SK-N-SH (cell line): ENCODE measurements at regions of chr12 and their contacts with region 1.

Region 1: DNA sequence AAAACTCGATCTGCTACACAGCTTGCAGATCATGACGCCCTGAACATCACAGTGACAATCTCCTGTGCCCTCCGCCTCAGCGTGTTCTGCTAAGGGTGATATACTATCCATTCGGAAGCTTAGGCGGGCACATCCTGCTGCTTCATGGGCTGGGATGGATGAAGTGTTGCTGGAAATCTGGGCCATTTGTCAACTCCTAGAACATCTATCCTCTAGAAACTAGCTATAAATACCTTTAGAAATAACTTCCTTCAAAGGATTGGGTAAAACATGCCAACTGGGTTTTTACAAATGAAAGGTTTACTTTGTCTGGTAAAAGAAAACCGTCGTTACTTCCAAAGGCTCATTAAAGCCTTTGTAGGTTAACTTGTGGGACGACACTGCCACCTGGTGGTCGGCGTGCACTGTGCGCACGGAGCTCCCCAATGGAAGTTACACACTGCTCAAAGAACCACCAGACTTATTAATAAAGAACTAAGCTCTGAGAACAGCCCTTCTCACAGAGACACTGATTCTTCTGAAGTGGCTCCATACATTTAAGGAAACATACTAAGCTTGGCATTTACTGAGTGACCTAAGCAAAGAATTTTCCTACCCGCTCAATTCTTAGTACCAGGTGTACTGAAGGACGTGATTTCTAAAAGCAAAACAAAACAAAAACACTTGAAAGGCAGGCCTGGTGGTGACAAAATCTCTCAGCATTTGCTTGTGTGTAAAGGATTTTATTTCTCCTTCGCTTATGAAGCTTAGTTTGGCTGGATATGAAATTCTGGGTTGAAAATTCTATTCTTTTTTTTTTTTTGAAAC is 21.6 kb upstream of the CACNA2D4 start:
- DNase-seq: peak; percentile 81
- H3K4me3 ChIP-seq: no peak overlapping the region; a peak in 1 of 4 replicates
- H3K27ac ChIP-seq: peak overlapping the region in 1 of 2 experiments; percentile 50; a peak in 1 of 4 replicates
- H3K4me1 ChIP-seq: peaks cover 0 to 31% of the 10 kb centered on the region in 2 experiments; a peak in 2 of 4 replicates
- H3K27me3 ChIP-seq: no peaks in the 10 kb centered on the region
- CTCF ChIP-seq: peak; percentile 98
- EP300 ChIP-seq: no peak
- RAD21 ChIP-seq: peak; percentile 98

Region 2: DNA sequence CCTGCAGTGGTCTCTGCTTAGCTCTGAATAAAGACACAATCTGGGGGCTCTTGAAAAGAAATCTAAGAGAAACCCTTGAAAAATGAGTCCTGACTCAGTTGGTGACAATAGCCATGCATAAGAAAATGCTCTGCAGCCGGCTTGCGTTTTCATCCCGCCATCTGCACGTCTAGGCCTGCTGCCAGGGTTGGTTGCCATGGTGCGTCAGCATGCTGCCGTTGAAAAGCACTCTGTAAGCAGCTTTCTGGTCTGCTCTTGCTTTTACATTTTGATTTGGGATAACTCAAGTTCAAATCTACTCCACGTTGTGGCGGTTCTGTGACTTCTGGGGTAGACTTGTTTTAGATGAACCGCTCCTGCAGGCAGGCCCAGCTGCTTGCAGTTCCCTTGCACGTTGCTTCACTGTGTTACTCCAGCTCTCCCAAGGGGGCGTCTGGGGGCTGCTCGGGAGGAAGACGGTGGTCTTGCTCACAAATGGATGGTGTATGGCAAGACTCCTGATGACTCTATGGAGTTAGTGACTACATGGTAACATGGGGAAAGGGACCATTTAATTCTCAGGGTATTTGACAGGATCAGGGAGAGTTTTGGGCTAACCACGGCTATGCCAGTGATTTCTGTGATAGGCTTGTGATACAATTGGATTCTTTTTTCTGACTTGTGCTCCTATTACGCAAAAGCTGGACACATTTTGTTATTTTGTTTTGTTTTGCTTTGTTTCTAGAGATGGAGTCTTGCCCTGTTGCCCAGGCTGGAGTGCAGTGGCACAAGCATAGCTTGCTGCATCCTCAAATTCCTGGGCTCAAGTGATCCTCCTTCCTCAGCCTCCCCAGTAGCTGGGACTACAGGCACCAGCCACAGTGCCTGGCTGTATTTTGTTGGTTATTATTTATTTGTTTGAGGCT is 295.2 kb before region 1 on chr12:
- CTCF ChIA-PET with region 1: interaction called, 140 read pairs
- POLR2A ChIA-PET with region 1: no interaction called
- DNase-seq: peak; percentile 88
- H3K4me3 ChIP-seq: no peak overlapping the region
- H3K27ac ChIP-seq: peak overlapping the region; percentile 56 to 89
- H3K4me1 ChIP-seq: peaks cover 15 to 29% of the 10 kb centered on the region in 2 experiments
- H3K27me3 ChIP-seq: no peaks in the 10 kb centered on the region
- CTCF ChIP-seq: no peak
- EP300 ChIP-seq: 0 out of 4 replicates have a peak, but pooled peaks of 1 of the 2 experiments have one; percentile 32
- RAD21 ChIP-seq: no peak; the same call in 1 of the 2 replicates

Region 3: DNA sequence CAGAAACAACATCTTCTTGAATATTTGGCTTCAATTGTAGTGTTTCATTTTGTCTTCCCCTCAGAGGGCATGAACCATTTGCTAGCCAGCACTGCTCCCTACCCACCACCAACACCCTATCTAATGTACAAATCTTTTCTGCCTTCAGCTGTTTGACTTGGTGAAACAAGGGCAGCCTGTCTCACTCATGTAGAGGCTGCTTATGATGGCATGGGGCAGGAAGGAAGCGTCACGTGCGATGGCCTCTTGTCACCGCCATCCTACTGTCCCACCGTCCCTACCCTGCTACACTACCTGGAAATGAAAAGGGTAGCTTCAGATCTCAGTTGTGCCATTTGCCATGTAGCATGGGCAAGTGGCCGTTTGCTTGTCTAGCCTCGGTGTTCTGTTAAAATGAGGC is 149.6 kb before region 1 on chr12:
- CTCF ChIA-PET with region 1: interaction called, 349 read pairs
- POLR2A ChIA-PET with region 1: interaction called, 9 read pairs
- DNase-seq: peak; percentile 9
- H3K4me3 ChIP-seq: no peak overlapping the region
- H3K27ac ChIP-seq: no peak overlapping the region
- H3K4me1 ChIP-seq: peaks cover 0 to 9% of the 10 kb centered on the region in 2 experiments; a peak in 1 of 4 replicates
- H3K27me3 ChIP-seq: no peaks in the 10 kb centered on the region
- CTCF ChIP-seq: no peak
- EP300 ChIP-seq: no peak
- RAD21 ChIP-seq: no peak

Region 4: GRCh38 chr12:1825382-1826102 is 114.5 kb before region 1 on chr12:
- CTCF ChIA-PET with region 1: interaction called, 19 read pairs
- POLR2A ChIA-PET with region 1: no interaction called
- DNase-seq: no peak
- H3K4me3 ChIP-seq: no peak overlapping the region
- H3K27ac ChIP-seq: no peak overlapping the region
- H3K4me1 ChIP-seq: peaks cover 0 to 74% of the 10 kb centered on the region in 2 experiments; a peak in 2 of 4 replicates
- H3K27me3 ChIP-seq: peaks cover 11% of the 10 kb centered on the region; the same call in 1 of the 2 replicates
- CTCF ChIP-seq: no peak
- EP300 ChIP-seq: no peak
- RAD21 ChIP-seq: no peak

Region 5: DNA sequence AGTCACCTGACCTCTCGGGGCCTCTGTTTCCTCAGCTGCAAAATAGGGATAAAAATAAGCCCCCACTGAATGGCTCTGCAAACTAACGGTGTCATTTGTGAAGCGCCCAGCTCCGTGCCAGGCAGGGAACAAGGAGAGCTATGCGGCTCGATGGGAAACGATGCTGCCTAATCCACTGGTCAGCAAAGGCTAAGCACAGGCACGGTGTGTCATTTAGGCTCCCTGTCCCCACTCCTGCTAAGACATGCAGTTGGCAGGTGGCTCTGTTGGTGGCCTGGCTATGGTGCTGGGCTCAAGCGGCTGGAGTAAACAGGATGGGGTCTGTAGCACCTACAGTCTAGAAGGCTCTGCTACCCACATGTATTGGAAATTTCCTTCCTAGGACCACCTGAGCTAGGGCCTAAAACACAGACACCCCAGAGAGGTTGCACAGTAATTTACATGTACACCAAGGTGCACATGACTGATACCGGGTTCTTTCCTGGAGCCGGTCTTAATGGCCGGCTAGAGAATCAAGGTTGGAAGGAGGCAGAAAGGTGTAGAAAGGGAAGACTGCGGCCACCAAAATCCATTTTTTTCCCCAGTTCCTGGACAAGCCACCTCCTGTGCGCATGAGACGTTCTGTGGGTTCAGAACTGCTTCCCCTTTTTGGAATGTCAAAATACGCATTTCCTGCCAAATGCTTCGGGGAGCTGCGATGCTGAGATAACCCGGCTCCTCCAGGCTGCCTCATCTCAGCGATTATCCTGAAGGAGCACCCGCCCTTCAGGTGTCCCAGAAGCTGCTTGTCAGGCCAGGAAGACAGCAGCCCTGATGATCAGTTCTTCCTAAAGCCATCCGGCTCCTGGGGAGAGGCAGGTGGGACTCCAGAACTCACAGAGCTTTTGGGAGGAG is 22.6 kb before region 1 on chr12:
- CTCF ChIA-PET with region 1: interaction called, 40 read pairs
- POLR2A ChIA-PET with region 1: no interaction called
- DNase-seq: peak; percentile 27
- H3K4me3 ChIP-seq: no peak overlapping the region
- H3K27ac ChIP-seq: no peak overlapping the region; a peak in 1 of 4 replicates
- H3K4me1 ChIP-seq: peaks cover 0 to 24% of the 10 kb centered on the region in 2 experiments; a peak in 1 of 4 replicates
- H3K27me3 ChIP-seq: no peaks in the 10 kb centered on the region
- CTCF ChIP-seq: no peak
- EP300 ChIP-seq: no peak
- RAD21 ChIP-seq: no peak

Region 6: GRCh38 chr12:1966561-1967226 is 26.7 kb after region 1 on chr12:
- CTCF ChIA-PET with region 1: interaction called, 32 read pairs
- POLR2A ChIA-PET with region 1: no interaction called
- DNase-seq: no peak
- H3K4me3 ChIP-seq: no peak overlapping the region
- H3K27ac ChIP-seq: no peak overlapping the region
- H3K4me1 ChIP-seq: no peaks in the 10 kb centered on the region; a peak in 1 of 4 replicates
- H3K27me3 ChIP-seq: no peaks in the 10 kb centered on the region
- CTCF ChIP-seq: no peak
- EP300 ChIP-seq: no peak
- RAD21 ChIP-seq: no peak

Region 7: GRCh38 chr12:2034633-2035430 is 94.8 kb after region 1 on chr12:
- CTCF ChIA-PET with region 1: interaction called, 27 read pairs
- POLR2A ChIA-PET with region 1: no interaction called
- DNase-seq: peak; percentile 97
- H3K4me3 ChIP-seq: peak overlapping the region; percentile 35 to 56
- H3K27ac ChIP-seq: no peak overlapping the region; a peak in 1 of 4 replicates
- H3K4me1 ChIP-seq: peaks cover 0 to 12% of the 10 kb centered on the region in 2 experiments; a peak in 1 of 4 replicates
- H3K27me3 ChIP-seq: peaks cover 22% of the 10 kb centered on the region; the same call in 1 of the 2 replicates
- CTCF ChIP-seq: peak; percentile 83
- EP300 ChIP-seq: 0 out of 4 replicates have a peak, but pooled peaks of 1 of the 2 experiments have one; percentile 5
- RAD21 ChIP-seq: peak; percentile 75

Region 8: GRCh38 chr12:2129076-2129475 is 189.1 kb after region 1 on chr12:
- CTCF ChIA-PET with region 1: no interaction called
- POLR2A ChIA-PET with region 1: no interaction called
- DNase-seq: peak; percentile 37
- H3K4me3 ChIP-seq: no peak overlapping the region
- H3K27ac ChIP-seq: peak overlapping the region in 1 of 2 experiments; percentile 30; a peak in 3 of 4 replicates
- H3K4me1 ChIP-seq: peaks cover 0 to 6% of the 10 kb centered on the region in 2 experiments; a peak in 1 of 4 replicates
- H3K27me3 ChIP-seq: no peaks in the 10 kb centered on the region
- CTCF ChIP-seq: no peak
- EP300 ChIP-seq: no peak
- RAD21 ChIP-seq: no peak

Region 9: GRCh38 chr12:2248901-2249381 is 308.9 kb after region 1 on chr12:
- CTCF ChIA-PET with region 1: no interaction called
- POLR2A ChIA-PET with region 1: no interaction called
- DNase-seq: peak; percentile 63
- H3K4me3 ChIP-seq: no peak overlapping the region
- H3K27ac ChIP-seq: peak overlapping the region in 1 of 2 experiments; percentile 93; a peak in 2 of 4 replicates
- H3K4me1 ChIP-seq: peaks cover 33 to 57% of the 10 kb centered on the region in 2 experiments
- H3K27me3 ChIP-seq: no peaks in the 10 kb centered on the region
- CTCF ChIP-seq: no peak
- EP300 ChIP-seq: no peak
- RAD21 ChIP-seq: 0 out of 2 replicates have a peak, but pooled peaks have one; percentile 2

Region 10: DNA sequence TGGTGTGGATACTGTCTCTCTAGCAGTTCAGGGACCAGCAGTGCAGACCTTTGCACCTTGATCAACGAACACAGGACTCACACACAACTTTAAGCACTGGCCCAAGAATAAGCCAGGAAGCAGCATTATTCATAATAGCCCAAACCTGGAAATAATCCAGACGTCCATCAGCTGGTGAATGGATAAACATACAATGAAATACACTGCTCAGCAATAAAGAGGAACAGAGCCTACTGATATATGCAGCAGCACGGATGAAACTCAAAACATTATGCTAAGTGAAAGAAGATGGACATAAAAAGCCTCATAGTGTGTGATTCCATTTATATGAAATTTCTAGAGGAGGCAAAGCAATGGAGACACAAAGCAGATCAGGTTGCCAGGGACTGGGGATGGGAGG is 550.8 kb after region 1 on chr12:
- CTCF ChIA-PET with region 1: no interaction called
- POLR2A ChIA-PET with region 1: no interaction called
- DNase-seq: no peak
- H3K4me3 ChIP-seq: no peak overlapping the region
- H3K27ac ChIP-seq: no peak overlapping the region
- H3K4me1 ChIP-seq: no peaks in the 10 kb centered on the region
- H3K27me3 ChIP-seq: no peaks in the 10 kb centered on the region
- CTCF ChIP-seq: no peak
- EP300 ChIP-seq: no peak
- RAD21 ChIP-seq: no peak